ENCODE measurements at regions of chr14 and their contacts with region 1.

Region 1: GRCh38 chr14:105020815-105021655 is at the start of gene CDCA4:
- DNase-seq: peak; percentile 99

Region 2: DNA sequence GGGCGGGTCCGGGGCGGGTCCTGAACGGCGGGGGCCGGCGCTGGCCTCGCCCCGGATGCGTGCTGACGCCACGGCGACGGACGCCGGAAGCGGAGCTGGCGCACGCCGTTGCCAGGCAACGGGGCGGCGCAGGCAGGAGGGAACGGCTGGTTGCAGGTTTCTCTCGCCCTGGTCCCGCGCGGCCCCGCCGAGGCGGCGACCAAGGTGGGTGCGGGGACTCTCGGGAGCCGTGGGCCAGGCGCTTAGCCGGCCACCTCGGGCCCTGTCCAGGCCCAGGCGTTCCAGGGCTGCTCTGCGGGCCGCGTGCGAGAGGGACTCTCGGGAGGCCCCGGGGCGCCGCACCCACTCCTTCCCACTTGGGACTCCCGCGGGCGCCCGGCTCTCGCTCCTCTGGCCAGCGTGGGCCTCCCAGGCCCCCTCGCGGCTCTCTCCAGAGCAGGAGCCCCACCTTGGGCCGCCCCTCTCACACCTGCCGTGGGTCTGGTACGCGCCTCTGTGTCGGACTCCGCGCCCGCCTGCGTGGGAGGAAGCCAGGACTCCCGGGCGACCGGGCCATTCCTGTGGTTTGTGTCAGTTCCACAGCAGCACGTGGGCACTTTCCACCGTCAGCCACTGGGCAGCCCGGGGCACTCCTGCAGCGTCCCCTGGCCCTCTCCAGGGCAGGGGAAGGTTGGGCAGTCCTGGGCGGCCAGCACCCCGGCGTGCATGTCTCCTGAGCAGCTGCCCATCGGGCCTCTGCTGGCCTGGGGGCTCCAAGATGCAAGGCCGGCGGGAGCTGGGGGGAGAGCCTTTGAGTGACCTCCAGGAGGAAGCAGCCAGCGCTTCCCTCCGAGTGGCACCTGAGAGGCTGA is 35.1 kb before region 1 on chr14 and contains the start of gene CLBA1:
- CTCF ChIA-PET with region 1: no interaction called
- POLR2A ChIA-PET with region 1: interaction called, 13 read pairs
- DNase-seq: peak; percentile 99

Region 3: DNA sequence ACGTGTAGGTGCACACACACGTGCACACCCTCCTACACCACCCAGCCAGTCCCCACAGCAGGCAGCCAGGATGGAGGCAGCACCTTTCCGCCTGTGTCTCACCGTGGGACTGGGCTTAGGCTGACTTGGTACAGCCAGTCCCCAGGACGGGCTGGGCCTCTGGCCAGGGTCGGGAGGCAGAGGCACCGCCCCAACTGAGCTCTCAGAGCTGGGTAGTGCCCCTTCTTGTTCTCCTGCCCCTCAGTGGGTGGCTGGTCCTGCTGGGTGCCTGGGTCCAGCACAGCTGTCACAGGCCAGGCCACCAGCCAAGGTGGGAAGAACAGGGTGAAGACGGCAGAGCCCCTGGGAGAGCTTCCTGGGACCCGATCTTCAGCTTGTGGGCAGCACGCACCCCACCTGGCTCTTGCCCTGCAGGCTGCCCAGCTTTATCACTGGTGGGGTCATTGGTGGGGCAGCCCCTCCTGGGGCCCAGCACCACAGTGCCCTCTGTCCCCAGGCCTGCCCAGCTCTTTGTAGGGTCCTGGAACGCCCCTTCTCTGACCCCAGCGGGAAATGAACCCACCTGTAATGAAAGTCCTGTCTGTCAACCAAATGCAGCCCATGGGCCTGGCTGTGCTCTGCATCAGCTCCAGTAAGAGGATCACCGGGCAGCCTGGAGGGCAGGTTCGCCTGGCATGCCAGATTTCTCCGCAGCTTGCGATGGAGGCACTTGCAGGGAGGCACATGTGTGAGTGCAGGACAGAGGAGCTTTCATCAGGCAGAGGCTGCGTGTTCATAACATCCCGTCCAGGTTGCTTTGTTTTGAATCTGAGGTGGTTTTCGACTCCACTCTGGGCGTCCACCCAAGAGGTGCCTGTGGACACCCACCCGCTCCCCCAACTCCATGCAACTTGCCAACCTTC is 14.9 kb before region 1 on chr14:
- CTCF ChIA-PET with region 1: no interaction called
- POLR2A ChIA-PET with region 1: interaction called, 29 read pairs
- DNase-seq: no peak

Region 4: DNA sequence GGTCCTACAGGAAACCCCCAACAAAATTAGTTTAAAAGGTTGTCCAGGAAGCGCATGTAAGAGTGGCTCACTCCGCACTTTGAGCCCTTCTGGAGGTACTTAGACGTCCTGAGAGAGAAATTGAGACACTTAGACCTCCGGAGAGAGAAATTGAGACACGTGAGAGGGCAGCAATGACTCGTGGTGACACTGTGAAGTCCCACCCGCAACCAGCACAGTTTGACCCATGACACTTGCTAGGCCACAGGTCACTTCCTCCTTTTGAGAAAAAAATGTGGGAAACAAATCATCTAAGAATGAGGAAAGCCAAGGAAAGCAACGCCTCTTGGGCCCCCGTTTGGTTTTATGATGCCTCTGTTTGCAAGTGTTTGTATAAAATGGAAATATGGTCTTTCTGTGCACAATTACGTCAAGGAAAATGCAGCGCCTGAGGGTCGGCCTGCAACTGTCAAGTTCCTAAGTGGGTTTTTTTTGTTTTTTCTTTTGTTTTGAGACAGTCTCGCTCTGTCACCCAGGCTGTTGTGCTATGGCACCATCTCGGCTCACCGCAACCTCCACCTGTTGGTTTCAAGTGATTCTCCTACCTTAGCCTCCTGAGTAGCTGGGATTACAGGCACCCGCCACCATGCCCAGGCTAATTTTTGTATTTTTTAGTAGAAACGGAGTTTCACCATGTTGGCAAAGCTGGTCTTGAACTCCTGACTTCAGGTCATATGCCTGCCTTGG is 13.4 kb after region 1 on chr14:
- CTCF ChIA-PET with region 1: interaction called, 5 read pairs
- POLR2A ChIA-PET with region 1: interaction called, 57 read pairs
- DNase-seq: no peak

Region 5: GRCh38 chr14:105045710-105046326 is 24.8 kb after region 1 on chr14:
- CTCF ChIA-PET with region 1: interaction called, 11 read pairs
- POLR2A ChIA-PET with region 1: interaction called, 12 read pairs
- DNase-seq: peak; percentile 92